ENCODE measurements at regions of chr1 and their contacts with region 1.

Region 1: GRCh38 chr1:22131875-22132486 is 10.9 kb downstream of the WNT4 start:
- DNase-seq: peak; percentile 43 to 53
- ATAC-seq: peak; percentile 56 to 86; a peak in 4 of 6 replicates
- H3K4me3 ChIP-seq: no peak overlapping the region
- H3K27ac ChIP-seq: peak overlapping the region in 1 of 2 experiments; percentile 40; a peak in 1 of 6 replicates
- H3K4me1 ChIP-seq: peaks cover 13% of the 10 kb centered on the region
- CTCF ChIP-seq: peak; percentile 76
- EP300 ChIP-seq: no peak
- POLR2A ChIP-seq: no peak
- RAD21 ChIP-seq: peak; percentile 79 to 86

Region 2: GRCh38 chr1:22105611-22106207 is 26.3 kb before region 1 on chr1:
- CTCF ChIA-PET with region 1: interaction called, 10 read pairs
- POLR2A ChIA-PET with region 1: no interaction called
- DNase-seq: peak; percentile 38 to 56
- ATAC-seq: peak; percentile 58 to 73; a peak in 4 of 6 replicates
- H3K4me3 ChIP-seq: no peak overlapping the region
- H3K27ac ChIP-seq: no peak overlapping the region
- H3K4me1 ChIP-seq: no peaks in the 10 kb centered on the region
- CTCF ChIP-seq: peak; percentile 54
- EP300 ChIP-seq: no peak
- POLR2A ChIP-seq: no peak
- RAD21 ChIP-seq: peak; percentile 53 to 61

Region 3: DNA sequence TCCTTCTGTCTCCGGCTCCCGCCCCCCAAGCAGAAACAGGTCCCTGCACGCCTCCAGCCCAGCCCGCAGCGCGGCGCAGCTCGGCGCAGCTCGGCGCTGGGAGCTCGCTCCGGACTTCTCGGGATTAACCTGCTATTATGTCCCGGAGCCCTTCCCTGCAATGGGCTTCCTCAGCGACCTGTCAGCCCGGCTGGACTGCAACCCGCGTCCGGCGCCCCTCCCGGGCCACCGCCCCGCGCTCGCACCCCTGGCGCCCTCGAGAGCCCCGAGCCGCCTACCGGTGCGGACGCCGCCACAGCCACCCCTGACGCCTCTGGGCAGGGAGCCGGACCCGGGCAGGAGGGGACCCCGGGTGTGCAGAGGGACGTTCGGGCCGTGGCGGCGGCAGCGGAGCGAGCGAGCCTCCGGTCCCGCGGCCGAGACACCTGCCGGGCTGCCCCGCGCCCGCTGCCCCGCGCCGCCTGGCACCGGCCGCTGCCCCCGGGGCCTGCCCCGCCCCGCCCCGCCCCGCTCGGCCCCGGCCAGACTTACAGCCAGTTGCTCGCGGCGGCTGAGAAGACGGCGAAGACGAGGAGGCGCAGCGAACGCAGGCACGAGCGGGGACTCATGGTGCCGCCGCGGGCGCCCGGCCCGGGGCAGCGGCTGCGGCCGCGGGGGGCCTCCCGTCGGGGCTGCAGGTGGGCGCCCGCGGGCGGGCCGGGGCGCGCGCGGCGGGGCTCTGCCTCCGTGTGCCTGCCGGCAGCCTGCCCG is 10.5 kb after region 1 on chr1:
- CTCF ChIA-PET with region 1: interaction called, 27 read pairs
- POLR2A ChIA-PET with region 1: no interaction called
- DNase-seq: peak in 1 of 2 experiments; percentile 25
- ATAC-seq: peak; percentile 60 to 66
- H3K4me3 ChIP-seq: peak overlapping the region; percentile 61
- H3K27ac ChIP-seq: peak overlapping the region; percentile 54 to 93; a peak in 5 of 6 replicates
- H3K4me1 ChIP-seq: peaks cover 5% of the 10 kb centered on the region; the same call in 2 of the 3 replicates
- CTCF ChIP-seq: no peak
- EP300 ChIP-seq: no peak
- POLR2A ChIP-seq: no peak
- RAD21 ChIP-seq: no peak

Region 4: GRCh38 chr1:22248746-22249145 is 116.8 kb after region 1 on chr1:
- CTCF ChIA-PET with region 1: no interaction called
- POLR2A ChIA-PET with region 1: no interaction called
- DNase-seq: no peak
- ATAC-seq: peak in 1 of 2 experiments; percentile 39; a peak in 3 of 6 replicates
- H3K4me3 ChIP-seq: no peak overlapping the region
- H3K27ac ChIP-seq: no peak overlapping the region
- H3K4me1 ChIP-seq: peaks cover 9% of the 10 kb centered on the region; the same call in 2 of the 3 replicates
- CTCF ChIP-seq: no peak
- EP300 ChIP-seq: no peak
- POLR2A ChIP-seq: no peak
- RAD21 ChIP-seq: no peak

Measured in A549 (cell line).